Motor neuron (in vitro differentiated cells): ENCODE measurements at regions of chr7 and their contacts with region 1.

Region 1: GRCh38 chr7:117715784-117716445 is 157.3 kb downstream of the CTTNBP2 start:
- ATAC-seq: peak in 5 of 8 experiments; percentile 52 to 85 (median 77)
- H3K4me3 ChIP-seq: no peak overlapping the region
- H3K27ac ChIP-seq: no peak overlapping the region
- H3K4me1 ChIP-seq: no peaks in the 10 kb centered on the region

Region 2: DNA sequence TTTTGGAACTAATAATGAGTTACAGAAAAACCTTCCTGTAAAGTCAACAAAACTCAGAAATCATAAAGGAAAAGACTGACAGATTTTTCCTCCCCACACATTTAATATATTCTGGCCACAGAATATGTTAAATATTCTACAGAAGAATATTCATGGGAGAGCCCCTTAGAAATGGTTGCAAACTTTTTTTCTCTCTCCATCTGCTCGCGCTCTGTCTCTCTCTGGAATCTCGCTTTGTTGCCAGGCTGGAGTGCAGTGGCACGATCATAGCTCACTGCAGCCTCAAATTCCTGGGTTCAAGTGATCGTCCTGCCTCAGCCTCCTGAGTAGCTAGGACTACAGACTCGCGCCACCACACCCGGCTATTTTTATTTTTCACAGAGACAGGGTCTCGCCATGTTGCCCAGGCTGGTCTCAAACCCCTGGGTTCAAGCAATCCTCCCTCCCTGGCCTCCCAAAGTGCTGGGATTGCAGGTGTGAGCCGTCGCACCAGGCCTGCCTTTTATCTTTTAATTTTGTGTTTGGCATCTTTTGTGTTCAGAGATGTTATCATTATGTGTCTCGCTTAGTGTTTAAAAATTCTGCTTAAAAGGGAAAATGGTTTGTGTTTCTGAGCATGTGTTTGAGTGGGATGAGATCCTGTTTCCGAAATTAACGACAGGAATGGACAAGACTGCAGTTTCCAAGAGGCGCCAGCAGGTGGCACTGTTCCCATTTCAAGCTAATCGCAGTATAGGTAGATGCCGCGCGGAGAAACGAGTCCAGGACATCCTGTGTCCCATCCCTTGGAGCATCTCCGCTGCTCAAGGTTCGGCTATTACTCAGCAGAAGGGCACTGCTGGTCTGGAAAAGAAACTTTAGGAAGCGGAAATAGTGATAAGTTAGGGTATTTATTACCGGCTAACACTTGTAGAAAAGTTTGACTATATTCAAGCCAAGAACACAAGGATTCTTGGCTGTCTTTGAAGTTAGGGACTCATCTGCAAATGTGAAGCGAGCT is 785.7 kb before region 1 on chr7:
- in situ Hi-C with region 1: loop called in 1 of 9 experiments (anchors 25 kb)
- ATAC-seq: peak; percentile 66 to 91 (median 82)
- H3K4me3 ChIP-seq: no peak overlapping the region
- H3K27ac ChIP-seq: no peak overlapping the region
- H3K4me1 ChIP-seq: no peaks in the 10 kb centered on the region

Region 3: GRCh38 chr7:117458977-117459583 is 256.8 kb before region 1 on chr7:
- in situ Hi-C with region 1: loop called in 3 of 9 experiments (anchors 25 kb)
- ATAC-seq: peak in 1 of 8 experiments; percentile 15
- H3K4me3 ChIP-seq: no peak overlapping the region
- H3K27ac ChIP-seq: no peak overlapping the region
- H3K4me1 ChIP-seq: no peaks in the 10 kb centered on the region